SK-MEL-5 (cell line): ENCODE measurements at regions of chrX and their contacts with region 1.

Region 1: GRCh38 chrX:24506055-24506454 is 41.0 kb downstream of the PDK3 start:
- DNase-seq: no peak

Region 2: GRCh38 chrX:24395775-24396174 is 110.3 kb before region 1 on chrX:
- in situ Hi-C with region 1: loop called (anchors 10 kb)
- DNase-seq: peak; percentile 80